ENCODE measurements at regions of chr3 and their contacts with region 1.

Region 1: DNA sequence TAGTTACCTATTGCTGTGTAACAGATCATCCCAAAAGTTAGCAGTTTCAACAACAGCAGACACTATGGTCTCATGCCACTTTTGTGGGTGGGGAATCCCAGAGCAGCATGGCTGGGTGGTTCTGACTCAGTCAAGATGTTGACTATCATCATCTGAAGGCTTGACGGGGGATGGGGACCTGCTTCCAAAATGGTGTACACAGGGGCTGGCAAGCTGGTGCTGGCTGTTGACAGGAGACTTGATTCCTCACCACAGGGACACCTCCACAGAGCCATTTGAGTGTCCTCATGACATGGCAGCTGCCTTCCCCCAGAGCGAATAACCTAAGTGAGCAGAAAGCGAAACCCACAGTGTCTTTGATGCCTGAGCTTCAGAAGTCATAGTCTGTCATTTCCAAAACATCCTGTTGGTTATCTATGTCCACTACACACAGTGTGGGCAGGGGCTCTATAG is 19.1 kb downstream of the DNAJB8 start:
- DNase-seq: no peak
- H3K4me3 ChIP-seq: no peak overlapping the region
- H3K27ac ChIP-seq: no peak overlapping the region
- H3K4me1 ChIP-seq: no peaks in the 10 kb centered on the region
- H3K27me3 ChIP-seq: no peaks in the 10 kb centered on the region
- CTCF ChIP-seq: no peak
- EP300 ChIP-seq: no peak
- POLR2A ChIP-seq: no peak

Region 2: GRCh38 chr3:128378631-128379347 is 68.8 kb before region 1 on chr3:
- intact Hi-C with region 1: no loop called
- DNase-seq: peak in 3 of 5 donors; percentile 43 to 65 (median 65)
- H3K4me3 ChIP-seq: no peak overlapping the region
- H3K27ac ChIP-seq: peak overlapping the region; percentile 11 to 13
- H3K4me1 ChIP-seq: peaks cover 11% of the 10 kb centered on the region
- H3K27me3 ChIP-seq: no peaks in the 10 kb centered on the region
- CTCF ChIP-seq: no peak
- EP300 ChIP-seq: no peak
- POLR2A ChIP-seq: no peak

Region 3: DNA sequence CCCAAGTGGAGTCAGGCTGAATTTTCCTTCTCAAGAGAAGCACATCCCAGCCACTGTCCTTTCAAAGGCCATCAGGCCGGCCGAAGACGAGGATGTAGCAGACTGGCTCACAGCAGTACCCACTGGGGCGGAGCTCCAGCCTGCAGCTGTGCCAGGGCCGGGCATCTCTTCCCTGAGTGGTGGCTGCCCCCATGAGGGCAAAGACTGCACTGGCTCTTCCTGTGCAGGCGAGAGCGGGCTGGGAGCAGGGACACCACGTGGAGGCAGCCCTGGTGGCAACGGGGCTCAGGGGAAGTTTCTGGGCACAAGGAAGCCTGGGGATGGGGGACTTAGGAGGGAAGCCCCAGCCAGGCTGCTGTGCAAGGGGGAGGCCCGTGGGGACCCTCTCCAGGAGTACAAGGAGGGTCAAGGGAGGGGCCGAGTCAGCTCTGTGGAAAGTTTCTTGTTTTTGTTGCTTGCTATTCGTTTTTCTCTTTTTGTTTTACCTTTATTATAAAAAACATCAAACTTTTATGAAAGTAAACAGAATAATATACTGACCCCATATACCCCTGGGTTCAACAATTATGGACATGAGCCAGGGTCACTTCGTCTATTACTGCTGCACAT is 136.9 kb after region 1 on chr3:
- intact Hi-C with region 1: loop called in 1 of 4 experiments (anchors 5 kb)
- DNase-seq: peak in 4 of 5 donors; percentile 28 to 59 (median 33)
- H3K4me3 ChIP-seq: no peak overlapping the region
- H3K27ac ChIP-seq: no peak overlapping the region
- H3K4me1 ChIP-seq: no peaks in the 10 kb centered on the region
- H3K27me3 ChIP-seq: no peaks in the 10 kb centered on the region
- CTCF ChIP-seq: peak in 1 of 3 donors; percentile 33
- EP300 ChIP-seq: no peak
- POLR2A ChIP-seq: no peak

Region 4: DNA sequence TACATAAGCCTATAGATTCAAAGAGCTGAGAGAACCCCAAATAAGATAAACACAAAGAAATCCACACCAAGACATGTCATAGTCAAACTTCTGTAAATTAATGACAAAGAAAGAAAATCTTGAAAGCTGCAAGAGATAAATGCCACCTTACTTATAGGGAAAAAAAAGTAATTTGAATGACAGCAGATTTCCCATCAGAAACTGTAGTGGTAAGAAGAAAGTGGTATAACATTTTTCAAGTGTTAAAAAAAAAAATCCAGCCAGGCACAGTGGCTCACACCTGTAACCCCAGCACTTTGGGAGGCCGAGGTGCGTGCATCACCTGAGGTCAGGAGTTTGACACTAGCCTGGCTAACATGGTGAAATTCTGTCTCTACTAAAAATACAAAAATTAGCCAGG is 508.9 kb after region 1 on chr3:
- intact Hi-C with region 1: no loop called
- DNase-seq: no peak
- H3K4me3 ChIP-seq: no peak overlapping the region
- H3K27ac ChIP-seq: no peak overlapping the region
- H3K4me1 ChIP-seq: no peaks in the 10 kb centered on the region
- H3K27me3 ChIP-seq: no peaks in the 10 kb centered on the region
- CTCF ChIP-seq: no peak
- EP300 ChIP-seq: no peak
- POLR2A ChIP-seq: no peak